Activated naive CD4-positive, alpha-beta T cell treated with anti-CD3 and anti-CD28 coated beads for 36 hours (primary cell): ENCODE measurements at regions of chr14 and their contacts with region 1.

Region 1: GRCh38 chr14:22570132-22570949 is 18.7 kb downstream of the DAD1 start:
- DNase-seq: peak; percentile 93
- H3K4me3 Mint-ChIP-seq: peak overlapping the region; percentile 85
- H3K27ac Mint-ChIP-seq: peak overlapping the region; percentile 97
- H3K4me1 Mint-ChIP-seq: peaks cover 68% of the 10 kb centered on the region
- H3K27me3 Mint-ChIP-seq: no peaks in the 10 kb centered on the region

Region 2: DNA sequence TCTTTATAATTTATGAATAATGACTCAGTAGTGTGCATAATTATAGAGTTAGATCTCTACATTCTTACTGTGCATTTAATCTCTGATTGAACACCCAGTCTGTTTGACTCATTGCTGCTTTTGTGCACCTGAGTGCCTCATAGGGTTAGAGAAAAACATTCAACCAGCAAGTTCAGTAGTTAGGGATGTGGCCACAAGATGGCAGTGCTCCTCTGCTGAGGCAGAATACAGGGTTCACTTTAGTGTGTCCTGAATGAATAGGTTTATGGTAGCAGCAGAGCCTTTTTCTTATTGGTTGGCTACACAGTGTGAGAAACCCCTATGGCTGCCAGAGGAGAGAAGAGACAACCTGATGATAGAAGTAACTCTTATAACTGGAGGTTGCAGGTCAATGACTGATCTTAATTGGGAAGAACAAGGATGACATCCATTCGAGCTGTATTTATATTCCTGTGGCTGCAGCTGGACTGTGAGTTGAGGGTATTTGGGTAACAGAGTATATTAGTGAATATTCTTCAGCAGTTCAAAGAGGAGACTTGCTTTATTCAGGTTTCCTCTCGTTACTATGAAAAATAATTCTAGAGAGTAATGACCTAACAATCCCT is 701.8 kb before region 1 on chr14:
- CTCF ChIA-PET with region 1: interaction called, 4 read pairs
- intact Hi-C with region 1: loop called (anchors 1 kb)
- DNase-seq: peak; percentile 95
- H3K4me3 Mint-ChIP-seq: peak overlapping the region; percentile 71
- H3K27ac Mint-ChIP-seq: peak overlapping the region; percentile 83
- H3K4me1 Mint-ChIP-seq: peaks cover 42% of the 10 kb centered on the region
- H3K27me3 Mint-ChIP-seq: no peaks in the 10 kb centered on the region

Region 3: DNA sequence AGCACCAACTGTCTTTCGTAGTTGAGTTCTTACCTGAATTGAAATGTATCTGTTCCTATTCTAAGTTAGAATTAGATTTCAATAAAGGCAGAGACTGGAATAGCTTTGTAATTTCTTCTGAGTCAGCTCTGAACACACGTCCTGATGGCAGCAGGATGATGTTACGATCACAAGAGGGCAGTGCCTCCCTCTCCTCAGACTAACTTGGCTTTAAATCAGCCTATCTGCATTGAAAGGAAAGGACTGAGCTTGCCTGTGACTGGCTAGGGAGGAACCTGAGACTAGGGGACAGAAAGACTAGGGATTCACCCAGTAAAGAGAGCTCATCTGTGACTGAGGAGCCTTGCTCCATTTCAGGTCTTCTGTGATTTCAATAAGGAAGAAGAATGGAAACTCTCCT is 573.0 kb before region 1 on chr14:
- CTCF ChIA-PET with region 1: interaction called, 12 read pairs
- intact Hi-C with region 1: no loop called
- DNase-seq: peak; percentile 65
- H3K4me3 Mint-ChIP-seq: peak overlapping the region; percentile 92
- H3K27ac Mint-ChIP-seq: peak overlapping the region; percentile 96
- H3K4me1 Mint-ChIP-seq: peaks cover 32% of the 10 kb centered on the region
- H3K27me3 Mint-ChIP-seq: no peaks in the 10 kb centered on the region

Region 4: DNA sequence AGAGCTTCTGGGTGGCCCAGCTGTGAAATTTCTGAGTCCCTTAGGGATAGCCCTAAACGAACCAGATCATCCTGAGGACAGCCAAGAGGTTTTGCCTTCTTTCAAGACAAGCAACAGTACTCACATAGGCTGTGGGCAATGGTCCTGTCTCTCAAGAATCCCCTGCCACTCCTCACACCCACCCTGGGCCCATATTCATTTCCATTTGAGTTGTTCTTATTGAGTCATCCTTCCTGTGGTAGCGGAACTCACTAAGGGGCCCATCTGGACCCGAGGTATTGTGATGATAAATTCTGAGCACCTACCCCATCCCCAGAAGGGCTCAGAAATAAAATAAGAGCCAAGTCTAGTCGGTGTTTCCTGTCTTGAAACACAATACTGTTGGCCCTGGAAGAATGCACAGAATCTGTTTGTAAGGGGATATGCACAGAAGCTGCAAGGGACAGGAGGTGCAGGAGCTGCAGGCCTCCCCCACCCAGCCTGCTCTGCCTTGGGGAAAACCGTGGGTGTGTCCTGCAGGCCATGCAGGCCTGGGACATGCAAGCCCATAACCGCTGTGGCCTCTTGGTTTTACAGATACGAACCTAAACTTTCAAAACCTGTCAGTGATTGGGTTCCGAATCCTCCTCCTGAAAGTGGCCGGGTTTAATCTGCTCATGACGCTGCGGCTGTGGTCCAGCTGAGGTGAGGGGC is 20.2 kb before region 1 on chr14:
- CTCF ChIA-PET with region 1: interaction called, 123 read pairs
- intact Hi-C with region 1: no loop called
- DNase-seq: peak; percentile 89
- H3K4me3 Mint-ChIP-seq: peak overlapping the region; percentile 67
- H3K27ac Mint-ChIP-seq: peak overlapping the region; percentile 98
- H3K4me1 Mint-ChIP-seq: peaks cover 92% of the 10 kb centered on the region
- H3K27me3 Mint-ChIP-seq: no peaks in the 10 kb centered on the region

Region 5: DNA sequence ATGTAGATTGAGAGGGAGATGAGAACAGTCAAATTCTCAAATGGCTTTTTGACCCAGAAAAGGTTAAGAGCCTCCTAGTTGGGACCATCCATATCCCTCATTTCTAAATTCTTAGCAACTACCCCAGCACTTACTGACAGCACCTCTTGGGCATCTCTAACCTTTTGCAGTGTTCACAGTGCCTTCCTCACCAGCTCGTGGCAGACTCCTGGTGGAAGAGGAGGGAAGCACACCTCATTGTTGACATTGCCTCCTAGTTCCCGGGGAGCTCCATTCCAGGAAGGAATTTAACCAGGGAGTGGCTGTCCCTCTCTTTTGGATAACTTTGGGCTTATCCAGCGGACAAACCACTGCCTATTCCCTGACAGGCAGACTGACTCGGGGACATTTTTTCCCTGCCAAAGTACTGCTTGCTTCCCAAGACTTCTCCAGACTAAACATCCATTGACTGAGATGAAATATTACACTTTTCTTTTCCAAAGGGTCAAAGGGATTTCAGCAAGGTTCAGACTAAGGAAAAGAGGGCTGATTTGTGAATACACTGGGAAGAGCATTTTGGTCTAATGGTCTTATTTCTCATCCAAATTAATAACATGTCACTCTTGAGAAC is 82.8 kb after region 1 on chr14:
- CTCF ChIA-PET with region 1: interaction called, 141 read pairs
- intact Hi-C with region 1: loop called (anchors 1 kb)
- DNase-seq: peak; percentile 78
- H3K4me3 Mint-ChIP-seq: no peak overlapping the region
- H3K27ac Mint-ChIP-seq: no peak overlapping the region
- H3K4me1 Mint-ChIP-seq: no peaks in the 10 kb centered on the region
- H3K27me3 Mint-ChIP-seq: no peaks in the 10 kb centered on the region

Region 6: GRCh38 chr14:22829661-22830442 is 259.5 kb after region 1 on chr14 and contains the start of gene MRPL52:
- CTCF ChIA-PET with region 1: interaction called, 20 read pairs
- intact Hi-C with region 1: no loop called
- DNase-seq: peak; percentile 94
- H3K4me3 Mint-ChIP-seq: peak within 1 kb of the TSS; percentile 94
- H3K27ac Mint-ChIP-seq: peak within 1 kb of the TSS; percentile 97
- H3K4me1 Mint-ChIP-seq: peaks cover 34% of the 10 kb centered on the region
- H3K27me3 Mint-ChIP-seq: no peaks in the 10 kb centered on the region
- total RNA-seq, gene MRPL52: 170 TPM